Right ventricle myocardium inferior (tissue), 1 donor: ENCODE measurements at regions of chr15 and their contacts with region 1.

Region 1: GRCh38 chr15:85681386-85681785 is 113.3 kb downstream of the KLHL25 start:
- DNase-seq: no peak
- ATAC-seq: no peak

Region 2: DNA sequence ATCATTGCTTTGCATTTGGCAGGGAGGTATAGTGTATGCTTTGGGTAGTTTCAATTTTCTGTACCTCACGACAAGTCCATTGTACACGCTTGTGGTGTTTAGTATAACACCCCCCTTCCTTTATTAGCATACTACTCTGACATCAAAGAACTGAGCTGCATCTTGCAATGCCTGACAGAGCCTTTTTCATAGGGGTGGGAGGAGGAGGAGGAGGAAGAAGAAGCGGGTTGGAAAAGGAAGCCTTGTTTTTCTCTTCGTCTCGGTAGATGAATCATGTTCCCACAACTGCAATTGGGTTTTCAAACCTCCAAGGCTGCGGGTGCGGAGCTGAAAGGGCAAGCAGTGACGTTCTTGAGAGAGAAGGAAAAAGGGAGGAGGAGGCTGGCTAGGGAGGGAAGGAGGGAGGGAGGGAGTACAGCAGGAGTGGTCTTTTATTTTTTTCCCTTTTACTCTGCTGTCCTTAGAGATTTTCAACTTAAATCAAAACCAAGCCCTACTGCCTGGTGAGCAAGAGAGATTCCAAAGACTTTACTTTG is 62.4 kb before region 1 on chr15:
- intact Hi-C with region 1: loop called (anchors 5 kb)
- DNase-seq: peak; percentile 84
- ATAC-seq: peak; percentile 82

Region 3: DNA sequence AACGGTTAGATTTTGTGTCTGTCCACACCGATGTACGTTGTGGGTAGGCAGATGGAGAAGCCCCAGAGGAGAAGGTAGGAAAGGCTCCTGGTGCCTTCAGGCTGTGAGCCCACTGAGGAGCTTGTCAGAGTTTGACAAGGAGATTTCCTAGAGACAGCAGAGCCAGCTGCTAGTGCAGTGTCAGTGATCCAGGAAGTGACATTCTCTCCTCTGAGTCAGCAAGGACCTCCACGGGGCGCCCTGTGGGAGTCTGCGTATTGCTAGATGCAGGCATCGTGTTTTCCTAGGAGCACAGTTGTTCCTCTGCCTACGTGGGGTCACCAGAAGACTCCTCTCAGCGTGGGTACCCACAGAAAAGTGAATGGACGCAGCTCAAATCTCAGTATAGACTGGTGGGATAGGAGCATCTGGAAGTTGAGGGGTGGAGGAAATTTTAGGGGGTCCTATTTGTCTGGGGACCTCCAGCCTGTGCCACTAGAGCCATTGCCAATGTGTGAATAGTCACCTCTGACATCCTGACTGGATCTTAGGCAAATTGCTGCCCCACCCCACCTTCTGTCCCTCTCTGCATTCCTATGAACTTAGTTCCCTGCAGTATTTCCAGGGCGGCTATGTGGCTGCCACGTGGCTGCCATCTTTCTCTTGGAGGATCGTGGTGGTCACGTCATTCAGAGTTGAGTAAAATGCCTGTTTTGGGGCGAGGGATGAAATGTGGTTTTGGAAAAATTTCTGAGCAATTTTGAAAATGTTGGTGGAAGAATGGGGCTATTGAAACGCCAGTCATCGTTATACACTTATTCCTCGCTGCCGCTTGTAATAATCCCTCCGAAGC is 198.2 kb after region 1 on chr15:
- intact Hi-C with region 1: no loop called
- DNase-seq: no peak
- ATAC-seq: no peak